GM13976 (cell line): ENCODE measurements at regions of chr4 and their contacts with region 1.

Region 1: GRCh38 chr4:89226665-89227574 is 80.7 kb downstream of the GPRIN3 start:
- DNase-seq: peak; percentile 37
- CTCF ChIP-seq: peak; percentile 68

Region 2: GRCh38 chr4:89434364-89434988 is 207.6 kb after region 1 on chr4:
- in situ Hi-C with region 1: loop called (anchors 25 kb)
- DNase-seq: peak; percentile 37
- CTCF ChIP-seq: peak; percentile 36

Region 3: DNA sequence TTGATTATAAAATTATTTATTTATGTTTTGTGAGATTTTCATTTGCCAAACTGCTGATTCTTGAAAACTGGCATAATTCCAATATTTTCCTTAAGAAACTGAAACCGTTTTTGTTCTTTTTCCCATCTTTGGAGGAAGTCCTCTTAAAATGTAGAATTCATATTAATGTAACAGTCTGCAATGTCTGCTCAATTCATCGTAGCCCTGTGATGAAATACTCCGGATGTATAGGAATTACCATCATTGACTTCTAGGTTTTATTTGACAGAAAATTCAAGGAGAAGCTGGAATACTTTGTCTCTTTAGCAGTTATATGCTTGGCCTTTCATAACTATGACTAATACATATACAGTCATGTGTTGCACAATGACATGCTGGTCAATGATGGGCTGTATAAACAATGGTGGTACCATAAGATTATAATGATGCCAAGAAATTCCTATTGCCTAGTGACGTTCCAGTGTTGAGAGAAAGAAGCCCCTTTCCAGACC is 265.7 kb after region 1 on chr4:
- in situ Hi-C with region 1: no loop called
- DNase-seq: no peak
- CTCF ChIP-seq: no peak